ENCODE measurements at regions of chr20 and their contacts with region 1.

Region 1: DNA sequence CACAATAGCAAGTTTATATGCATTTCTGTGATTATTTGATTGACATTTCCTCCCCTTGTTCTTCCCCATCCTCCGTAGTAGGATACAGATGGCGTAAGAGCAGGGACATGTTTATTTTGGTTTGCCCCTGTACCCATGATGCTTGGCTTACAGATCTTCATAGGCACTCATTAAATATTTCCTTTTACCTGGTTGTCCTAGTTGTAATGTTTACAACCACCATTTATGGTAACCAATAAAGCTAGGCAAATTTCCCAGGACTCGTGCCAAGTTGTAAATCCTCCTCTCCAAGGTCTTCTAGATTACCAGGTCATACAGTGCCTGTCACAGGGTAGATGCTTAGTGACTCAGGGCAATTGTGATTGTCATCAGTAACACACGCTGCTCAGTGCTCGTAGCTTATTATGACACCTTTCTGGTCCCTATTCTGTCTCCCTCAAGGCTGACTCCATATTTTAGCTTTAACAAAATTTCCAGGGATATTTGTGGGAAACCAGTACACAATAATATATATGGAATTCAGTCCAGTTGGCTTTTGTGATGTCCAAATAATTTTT is 24.8 kb downstream of the CYP24A1 start:
- DNase-seq: peak; percentile 61 to 100
- H3K4me3 ChIP-seq: no peak overlapping the region
- H3K27ac ChIP-seq: peak overlapping the region; percentile 85
- H3K4me1 ChIP-seq: peaks cover 71% of the 10 kb centered on the region
- H3K27me3 ChIP-seq: no peaks in the 10 kb centered on the region
- CTCF ChIP-seq: no peak

Region 2: DNA sequence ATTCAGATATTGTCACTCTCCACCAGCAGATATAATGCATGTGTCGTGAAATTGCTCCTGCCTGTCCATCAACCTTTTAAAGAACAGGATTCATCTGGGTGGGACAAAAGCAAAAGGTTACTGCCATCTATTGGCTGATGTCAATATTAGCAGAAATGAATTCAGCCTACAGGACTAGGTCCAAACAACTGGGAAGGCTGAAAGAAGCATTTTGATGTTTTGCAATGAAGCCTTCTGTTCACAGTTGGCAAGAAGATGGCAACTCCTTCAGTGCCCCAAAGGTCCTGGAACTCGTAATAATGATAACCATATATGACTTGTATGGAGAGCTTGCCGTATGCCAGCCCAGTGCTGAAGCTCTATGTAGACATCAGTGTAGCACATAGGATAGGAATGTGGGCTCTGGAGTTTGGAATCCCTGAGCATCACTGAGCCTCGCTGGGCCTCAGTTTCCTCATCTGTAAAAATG is 86.2 kb before region 1 on chr20:
- CTCF ChIA-PET with region 1: no interaction called
- POLR2A ChIA-PET with region 1: no interaction called
- intact Hi-C with region 1: no loop called
- DNase-seq: peak in 1 of 2 experiments; percentile 60
- H3K4me3 ChIP-seq: no peak overlapping the region
- H3K27ac ChIP-seq: no peak overlapping the region
- H3K4me1 ChIP-seq: peaks cover 13% of the 10 kb centered on the region
- H3K27me3 ChIP-seq: no peaks in the 10 kb centered on the region
- CTCF ChIP-seq: peak; percentile 79

Region 3: GRCh38 chr20:54132612-54133433 is 16.2 kb before region 1 on chr20:
- CTCF ChIA-PET with region 1: interaction called, 3 read pairs
- POLR2A ChIA-PET with region 1: interaction called, 5 read pairs
- intact Hi-C with region 1: loop called (anchors 1 kb)
- DNase-seq: peak; percentile 62 to 100
- H3K4me3 ChIP-seq: peak overlapping the region; percentile 6; the same call in 1 of the 2 replicates
- H3K27ac ChIP-seq: peak overlapping the region; percentile 99
- H3K4me1 ChIP-seq: peaks cover 48% of the 10 kb centered on the region
- H3K27me3 ChIP-seq: no peaks in the 10 kb centered on the region
- CTCF ChIP-seq: no peak

Region 4: DNA sequence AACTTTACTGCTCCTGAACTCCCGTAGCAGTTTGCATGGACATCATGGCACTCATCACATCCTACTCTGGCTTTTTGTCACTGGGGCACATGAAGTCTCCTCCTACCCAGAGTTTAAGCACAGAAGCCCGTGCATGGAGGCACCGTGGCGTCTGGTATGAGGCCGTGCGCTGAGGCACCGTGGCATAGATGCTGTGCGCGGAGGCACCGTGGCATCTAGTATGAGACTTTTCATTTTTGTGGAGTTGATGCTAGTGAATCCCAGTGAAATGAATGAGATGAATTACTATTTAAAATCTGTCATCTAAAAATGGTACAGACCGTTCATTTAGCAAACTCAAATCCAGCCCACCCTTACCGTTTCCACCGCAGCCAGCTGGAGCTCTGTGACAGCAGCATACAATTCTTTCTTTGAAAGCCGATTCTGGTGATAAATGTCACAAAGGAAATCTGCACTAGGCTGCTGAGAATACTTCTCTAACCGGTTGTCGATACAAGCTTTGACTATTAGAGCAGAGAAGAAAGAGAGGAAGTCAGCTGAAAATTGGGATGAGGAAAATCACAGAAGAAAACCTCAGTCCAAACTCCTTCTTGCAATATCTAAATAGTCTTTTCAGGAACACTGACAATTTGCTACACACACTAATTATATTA is 13.5 kb after region 1 on chr20:
- CTCF ChIA-PET with region 1: no interaction called
- POLR2A ChIA-PET with region 1: no interaction called
- intact Hi-C with region 1: no loop called
- DNase-seq: peak in 1 of 2 experiments; percentile 31
- H3K4me3 ChIP-seq: no peak overlapping the region
- H3K27ac ChIP-seq: no peak overlapping the region
- H3K4me1 ChIP-seq: peaks cover 19% of the 10 kb centered on the region
- H3K27me3 ChIP-seq: no peaks in the 10 kb centered on the region
- CTCF ChIP-seq: no peak

Region 5: GRCh38 chr20:54234991-54235658 is 86.1 kb after region 1 on chr20:
- CTCF ChIA-PET with region 1: no interaction called
- POLR2A ChIA-PET with region 1: no interaction called
- intact Hi-C with region 1: no loop called
- DNase-seq: no peak
- H3K4me3 ChIP-seq: no peak overlapping the region
- H3K27ac ChIP-seq: no peak overlapping the region
- H3K4me1 ChIP-seq: no peaks in the 10 kb centered on the region
- H3K27me3 ChIP-seq: no peaks in the 10 kb centered on the region
- CTCF ChIP-seq: no peak